Right ventricle myocardium superior (tissue), 1 donor: ENCODE measurements at regions of chr17 and their contacts with region 1.

Region 1: DNA sequence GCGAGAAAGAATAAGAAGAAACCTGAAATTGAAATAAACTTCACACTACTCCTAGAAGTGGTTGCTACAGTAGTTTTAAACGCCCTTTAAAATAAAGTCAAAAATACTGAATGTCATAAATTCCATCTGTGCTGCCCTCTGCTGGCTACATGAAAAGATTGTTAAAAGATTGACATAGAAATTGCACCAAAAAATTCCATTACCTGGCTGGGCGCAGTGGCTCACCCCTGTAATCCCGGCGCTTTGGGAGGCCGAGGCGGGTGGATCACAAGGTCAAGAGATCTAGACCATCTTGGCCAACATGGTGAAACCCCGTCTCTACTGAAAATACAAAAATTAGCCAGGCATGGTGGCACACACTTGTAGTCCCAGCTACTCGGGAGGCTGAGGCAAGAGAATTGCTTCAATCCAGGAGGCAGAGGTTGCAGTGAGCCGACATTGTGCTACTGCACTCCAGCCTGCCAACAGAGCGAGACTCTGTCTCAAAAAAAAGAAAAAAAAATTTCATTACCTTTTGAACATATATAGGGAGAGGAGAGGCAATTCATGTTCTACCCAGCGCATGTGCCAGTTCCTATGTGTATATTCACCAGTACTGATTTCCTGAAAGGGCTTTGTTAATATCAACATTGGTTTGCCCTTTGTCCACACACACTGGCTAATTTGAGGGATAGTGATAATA is 36.5 kb downstream of the CYTH1 start:
- DNase-seq: no peak
- ATAC-seq: no peak

Region 2: DNA sequence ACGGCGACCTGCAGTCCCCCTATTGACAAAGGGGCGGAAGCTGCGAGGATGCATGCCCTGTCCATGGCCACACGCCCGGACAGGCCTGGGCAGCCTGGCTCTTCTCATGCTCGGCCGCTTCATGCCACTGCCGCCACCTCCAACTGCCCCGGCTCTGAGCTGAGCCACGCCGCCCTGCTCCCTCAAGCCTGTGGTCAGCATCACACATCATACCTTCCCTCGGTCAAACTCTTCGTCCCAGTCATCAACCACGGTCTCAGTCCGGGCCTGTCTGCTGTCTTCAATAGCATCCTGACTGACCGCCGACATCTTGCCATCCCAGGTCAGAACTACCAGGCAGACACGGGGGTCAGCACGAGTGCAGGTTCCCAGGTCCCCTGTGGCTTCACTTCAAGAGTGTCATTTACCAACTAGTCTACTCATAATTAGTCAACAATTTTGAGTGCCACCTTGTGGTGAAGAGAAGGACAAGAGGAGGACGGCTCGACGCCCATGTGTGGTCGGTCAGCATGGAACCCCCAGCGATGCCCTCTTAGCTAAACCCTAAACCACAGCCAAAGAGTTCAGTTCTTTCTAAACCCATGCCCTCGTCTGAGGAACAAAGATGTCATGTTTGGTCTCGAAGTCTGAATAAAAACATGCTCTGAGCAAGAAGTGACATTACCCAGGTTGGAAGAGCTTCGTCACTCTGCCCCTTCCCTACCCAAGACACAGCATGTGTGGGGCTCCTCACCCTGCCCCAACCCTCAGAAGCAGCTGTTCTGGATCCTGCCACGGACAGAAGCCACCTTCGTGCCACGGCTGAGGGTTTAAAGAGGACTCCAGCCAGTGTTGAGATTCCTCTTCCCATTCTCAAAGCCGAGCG is 53.4 kb after region 1 on chr17:
- intact Hi-C with region 1: loop called (anchors 10 kb)
- DNase-seq: peak; percentile 38
- ATAC-seq: peak; percentile 46